GM12878 (cell line): ENCODE measurements at regions of chr17 and their contacts with region 1.

Region 1: GRCh38 chr17:29369831-29370735 is 20.1 kb upstream of the TAOK1 start:
- DNase-seq: peak; percentile 50
- ATAC-seq: peak; percentile 98
- H3K4me3 ChIP-seq: no peak overlapping the region
- H3K27ac ChIP-seq: no peak overlapping the region
- H3K4me1 ChIP-seq: no peaks in the 10 kb centered on the region
- H3K27me3 ChIP-seq: no peaks in the 10 kb centered on the region
- CTCF ChIP-seq: peak; percentile 74 to 85 (median 76)
- EP300 ChIP-seq: no peak
- POLR2A ChIP-seq: no peak
- RAD21 ChIP-seq: peak; percentile 74

Region 2: DNA sequence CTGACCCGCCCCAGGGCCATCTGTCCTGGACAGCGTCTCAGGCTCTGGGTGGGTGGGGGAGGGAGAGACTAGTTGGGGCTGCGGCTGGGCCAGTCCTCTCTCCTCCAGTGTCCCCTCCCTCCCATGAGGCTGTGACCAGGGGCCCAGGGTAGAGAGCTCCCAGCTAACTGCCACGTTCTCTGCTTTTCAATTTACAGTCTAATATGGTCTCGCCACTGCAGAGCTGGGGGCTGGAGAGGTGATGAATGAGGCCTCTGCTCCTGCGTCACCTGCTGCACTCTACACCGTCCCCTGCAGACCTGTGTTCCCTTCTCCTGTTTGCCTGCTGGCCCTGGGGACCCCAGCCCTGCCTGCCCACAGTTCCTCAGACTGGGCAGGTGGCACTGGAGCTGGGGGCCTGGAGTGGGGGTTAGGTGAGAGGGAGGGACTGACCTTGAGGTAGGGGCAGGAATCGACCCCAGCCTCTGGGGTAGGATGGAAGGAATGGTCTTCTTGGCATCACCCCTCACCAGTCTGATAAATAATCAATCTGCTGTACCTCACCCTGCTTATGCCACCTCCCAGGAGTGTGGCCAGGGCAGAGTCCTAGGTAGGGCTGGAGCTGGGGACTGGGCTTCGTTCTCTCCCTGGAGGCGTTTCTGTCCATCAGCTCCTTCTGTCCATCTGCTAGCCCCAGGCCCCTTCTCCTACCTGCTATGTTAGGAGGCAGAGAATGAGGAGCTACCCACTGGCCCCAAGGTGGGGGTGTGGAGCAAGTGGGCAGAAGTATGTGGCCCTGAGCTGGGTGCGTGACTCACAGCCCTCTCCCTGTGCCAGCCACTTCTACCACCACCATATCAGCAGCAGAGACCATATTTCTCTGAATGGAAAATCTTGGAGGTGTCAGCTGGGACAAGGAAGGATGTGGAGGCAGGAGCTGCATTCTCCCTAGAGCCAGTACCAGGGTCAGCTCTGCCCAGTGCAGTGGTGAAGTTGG is 377.2 kb before region 1 on chr17:
- CTCF ChIA-PET with region 1: no interaction called
- POLR2A ChIA-PET with region 1: no interaction called
- RAD21 ChIA-PET with region 1: no interaction called
- SMC1A ChIA-PET with region 1: no interaction called
- in situ Hi-C with region 1: no loop called
- intact Hi-C with region 1: no loop called
- DNase-seq: no peak
- ATAC-seq: no peak
- H3K4me3 ChIP-seq: no peak overlapping the region
- H3K27ac ChIP-seq: no peak overlapping the region
- H3K4me1 ChIP-seq: peaks cover 4% of the 10 kb centered on the region; the same call in 1 of the 2 replicates
- H3K27me3 ChIP-seq: no peaks in the 10 kb centered on the region; a peak in 1 of 4 replicates
- CTCF ChIP-seq: no peak
- EP300 ChIP-seq: no peak
- POLR2A ChIP-seq: no peak
- RAD21 ChIP-seq: no peak

Region 3: GRCh38 chr17:29210879-29211278 is 159.2 kb before region 1 on chr17:
- CTCF ChIA-PET with region 1: no interaction called
- POLR2A ChIA-PET with region 1: no interaction called
- RAD21 ChIA-PET with region 1: no interaction called
- SMC1A ChIA-PET with region 1: no interaction called
- in situ Hi-C with region 1: no loop called
- intact Hi-C with region 1: no loop called
- DNase-seq: no peak
- ATAC-seq: no peak
- H3K4me3 ChIP-seq: no peak overlapping the region
- H3K27ac ChIP-seq: no peak overlapping the region
- H3K4me1 ChIP-seq: no peaks in the 10 kb centered on the region
- H3K27me3 ChIP-seq: no peaks in the 10 kb centered on the region
- CTCF ChIP-seq: no peak
- EP300 ChIP-seq: no peak
- POLR2A ChIP-seq: no peak
- RAD21 ChIP-seq: no peak

Region 4: GRCh38 chr17:29347831-29348629 is 22.1 kb before region 1 on chr17:
- CTCF ChIA-PET with region 1: interaction called, 11 read pairs
- POLR2A ChIA-PET with region 1: no interaction called
- RAD21 ChIA-PET with region 1: interaction called, 3 read pairs
- SMC1A ChIA-PET with region 1: interaction called, 3 read pairs
- in situ Hi-C with region 1: no loop called
- intact Hi-C with region 1: no loop called
- DNase-seq: no peak
- ATAC-seq: no peak
- H3K4me3 ChIP-seq: no peak overlapping the region
- H3K27ac ChIP-seq: no peak overlapping the region
- H3K4me1 ChIP-seq: no peaks in the 10 kb centered on the region
- H3K27me3 ChIP-seq: no peaks in the 10 kb centered on the region
- CTCF ChIP-seq: no peak
- EP300 ChIP-seq: no peak
- POLR2A ChIP-seq: no peak
- RAD21 ChIP-seq: no peak

Region 5: DNA sequence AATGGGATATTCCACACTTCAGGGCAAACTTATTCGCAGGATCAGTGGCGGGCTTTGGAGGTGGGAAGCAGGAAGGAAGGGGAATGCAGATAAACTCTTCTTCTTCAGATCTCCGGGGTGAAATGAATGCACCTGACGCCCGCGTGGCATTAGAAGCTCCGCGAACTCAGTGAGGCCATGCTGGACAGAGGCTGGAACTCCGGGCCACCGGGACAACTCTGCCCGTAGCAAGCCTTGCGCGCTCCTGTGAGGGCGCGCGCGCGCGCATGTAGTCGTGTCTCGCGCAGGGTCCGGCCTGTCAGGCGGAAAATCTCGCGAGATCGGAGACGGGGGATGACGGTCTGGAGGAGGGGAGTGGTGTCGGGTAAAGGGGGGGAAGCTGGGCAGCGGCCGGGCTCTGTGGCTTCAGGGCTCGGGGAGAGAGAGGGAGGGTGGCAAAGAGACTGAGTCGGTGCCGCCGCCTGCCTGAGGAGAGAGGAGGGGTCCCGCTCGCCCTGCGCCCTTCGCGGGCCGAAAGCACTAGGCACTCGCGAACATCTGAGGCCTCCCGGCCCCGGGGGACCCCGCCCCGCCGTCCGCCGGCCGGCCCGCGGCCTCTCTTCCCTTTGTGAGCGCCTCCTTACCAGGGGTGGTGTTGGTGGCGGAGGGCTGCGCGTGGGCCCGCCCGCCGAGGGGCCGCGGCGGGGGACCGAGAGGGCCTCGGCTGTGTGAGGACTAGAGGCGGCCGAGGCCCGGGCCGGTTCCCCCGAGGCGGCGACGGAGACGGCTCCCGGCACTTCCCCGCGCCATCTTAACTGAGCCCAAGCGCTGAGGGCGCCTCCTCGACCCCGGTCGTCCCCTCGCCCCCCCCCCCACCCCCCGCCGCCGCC is 20.1 kb after region 1 on chr17 and contains the start of gene TAOK1:
- CTCF ChIA-PET with region 1: interaction called, 14 read pairs
- POLR2A ChIA-PET with region 1: no interaction called
- RAD21 ChIA-PET with region 1: interaction called, 7 read pairs
- SMC1A ChIA-PET with region 1: interaction called, 6 read pairs
- in situ Hi-C with region 1: no loop called
- intact Hi-C with region 1: no loop called
- DNase-seq: peak; percentile 88
- ATAC-seq: peak; percentile 94
- H3K4me3 ChIP-seq: peak within 1 kb of the TSS; percentile 96
- H3K27ac ChIP-seq: peak within 1 kb of the TSS; percentile 93
- H3K4me1 ChIP-seq: no peaks in the 10 kb centered on the region
- H3K27me3 ChIP-seq: no peaks in the 10 kb centered on the region
- CTCF ChIP-seq: no peak
- EP300 ChIP-seq: no peak
- POLR2A ChIP-seq: peak; percentile 98
- RAD21 ChIP-seq: no peak
- polyA plus RNA-seq, gene TAOK1: 2.4 to 3.4 TPM

Region 6: DNA sequence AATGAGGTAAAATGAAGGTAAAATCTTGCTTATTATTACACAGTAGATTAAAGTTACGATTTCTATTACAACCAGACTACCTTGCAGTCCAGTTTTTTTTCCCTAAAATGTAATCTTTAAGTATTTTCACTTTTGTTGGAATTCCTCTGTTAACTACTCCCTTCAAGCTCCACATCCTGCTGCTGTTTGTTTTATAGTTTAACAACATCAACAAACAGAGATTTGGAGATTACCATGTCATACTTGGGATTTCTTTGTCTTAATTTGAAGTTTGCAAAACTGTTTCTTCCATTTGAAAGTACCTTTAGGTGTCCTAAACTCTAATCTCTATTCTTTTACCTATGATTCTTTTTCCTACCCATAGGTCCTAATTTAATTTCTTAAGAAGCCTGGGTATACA is 113.4 kb after region 1 on chr17:
- CTCF ChIA-PET with region 1: interaction called, 32 read pairs
- POLR2A ChIA-PET with region 1: no interaction called
- RAD21 ChIA-PET with region 1: no interaction called
- SMC1A ChIA-PET with region 1: interaction called, 11 read pairs
- in situ Hi-C with region 1: no loop called
- intact Hi-C with region 1: no loop called
- DNase-seq: no peak
- ATAC-seq: no peak
- H3K4me3 ChIP-seq: no peak overlapping the region
- H3K27ac ChIP-seq: no peak overlapping the region
- H3K4me1 ChIP-seq: no peaks in the 10 kb centered on the region
- H3K27me3 ChIP-seq: no peaks in the 10 kb centered on the region
- CTCF ChIP-seq: no peak
- EP300 ChIP-seq: no peak
- POLR2A ChIP-seq: no peak
- RAD21 ChIP-seq: no peak

Region 7: GRCh38 chr17:29533976-29534375 is 163.9 kb after region 1 on chr17:
- CTCF ChIA-PET with region 1: interaction called, 72 read pairs
- POLR2A ChIA-PET with region 1: interaction called, 7 read pairs
- RAD21 ChIA-PET with region 1: interaction called, 32 read pairs
- SMC1A ChIA-PET with region 1: interaction called, 32 read pairs
- in situ Hi-C with region 1: loop called (anchors 10 kb)
- intact Hi-C with region 1: loop called (anchors 1 kb)
- DNase-seq: no peak
- ATAC-seq: no peak
- H3K4me3 ChIP-seq: no peak overlapping the region
- H3K27ac ChIP-seq: no peak overlapping the region
- H3K4me1 ChIP-seq: no peaks in the 10 kb centered on the region
- H3K27me3 ChIP-seq: no peaks in the 10 kb centered on the region
- CTCF ChIP-seq: no peak
- EP300 ChIP-seq: no peak
- POLR2A ChIP-seq: no peak
- RAD21 ChIP-seq: no peak

Region 8: GRCh38 chr17:29589524-29590410 is 219.7 kb after region 1 on chr17 and contains the start of gene GIT1:
- CTCF ChIA-PET with region 1: interaction called, 21 read pairs
- POLR2A ChIA-PET with region 1: no interaction called
- RAD21 ChIA-PET with region 1: interaction called, 16 read pairs
- SMC1A ChIA-PET with region 1: interaction called, 5 read pairs
- in situ Hi-C with region 1: no loop called
- intact Hi-C with region 1: loop called (anchors 10 kb)
- DNase-seq: no peak
- ATAC-seq: peak; percentile 74
- H3K4me3 ChIP-seq: peak within 1 kb of the TSS; percentile 94
- H3K27ac ChIP-seq: peak within 1 kb of the TSS; percentile 72
- H3K4me1 ChIP-seq: peaks cover 52% of the 10 kb centered on the region
- H3K27me3 ChIP-seq: no peaks in the 10 kb centered on the region; a peak in 1 of 4 replicates
- CTCF ChIP-seq: no peak
- EP300 ChIP-seq: no peak
- POLR2A ChIP-seq: peak; percentile 63; the same call in 1 of the 2 replicates
- RAD21 ChIP-seq: no peak
- polyA plus RNA-seq, gene GIT1: 0.24 to 0.58 TPM